CD8-positive, alpha-beta T cell (primary cell): ENCODE measurements at regions of chr1 and their contacts with region 1.

Region 1: GRCh38 chr1:167533851-167534300 is 15.5 kb upstream of the CD247 start:
- DNase-seq: peak; percentile 37 to 80 (median 71)
- ATAC-seq: peak; percentile 93
- H3K4me3 ChIP-seq: no peak overlapping the region
- H3K4me3 Mint-ChIP-seq: no peak overlapping the region
- H3K27ac ChIP-seq: no peak overlapping the region
- H3K27ac Mint-ChIP-seq: no peak overlapping the region
- H3K4me1 ChIP-seq: no peaks in the 10 kb centered on the region
- H3K4me1 Mint-ChIP-seq: peaks cover 3% of the 10 kb centered on the region
- H3K27me3 ChIP-seq: no peaks in the 10 kb centered on the region
- H3K27me3 Mint-ChIP-seq: no peaks in the 10 kb centered on the region
- CTCF ChIP-seq: peak; percentile 98

Region 2: GRCh38 chr1:167059045-167059808 is 474.6 kb before region 1 on chr1:
- CTCF ChIA-PET with region 1: interaction called, 5 read pairs
- POLR2A ChIA-PET with region 1: no interaction called
- intact Hi-C with region 1: loop called in 1 of 2 experiments (anchors 1 kb)
- DNase-seq: peak; percentile 46 to 85 (median 74)
- ATAC-seq: peak; percentile 84
- H3K4me3 ChIP-seq: no peak overlapping the region
- H3K4me3 Mint-ChIP-seq: no peak overlapping the region
- H3K27ac ChIP-seq: no peak overlapping the region
- H3K27ac Mint-ChIP-seq: no peak overlapping the region
- H3K4me1 ChIP-seq: peaks cover 5% of the 10 kb centered on the region
- H3K4me1 Mint-ChIP-seq: peaks cover 6% of the 10 kb centered on the region
- H3K27me3 ChIP-seq: no peaks in the 10 kb centered on the region
- H3K27me3 Mint-ChIP-seq: no peaks in the 10 kb centered on the region
- CTCF ChIP-seq: peak; percentile 93

Region 3: GRCh38 chr1:167388976-167389375 is 144.9 kb before region 1 on chr1:
- CTCF ChIA-PET with region 1: interaction called, 11 read pairs
- POLR2A ChIA-PET with region 1: no interaction called
- intact Hi-C with region 1: no loop called
- DNase-seq: no peak
- ATAC-seq: no peak
- H3K4me3 ChIP-seq: no peak overlapping the region
- H3K4me3 Mint-ChIP-seq: no peak overlapping the region
- H3K27ac ChIP-seq: no peak overlapping the region
- H3K27ac Mint-ChIP-seq: no peak overlapping the region
- H3K4me1 ChIP-seq: no peaks in the 10 kb centered on the region
- H3K4me1 Mint-ChIP-seq: no peaks in the 10 kb centered on the region
- H3K27me3 ChIP-seq: no peaks in the 10 kb centered on the region
- H3K27me3 Mint-ChIP-seq: no peaks in the 10 kb centered on the region
- CTCF ChIP-seq: no peak

Region 4: DNA sequence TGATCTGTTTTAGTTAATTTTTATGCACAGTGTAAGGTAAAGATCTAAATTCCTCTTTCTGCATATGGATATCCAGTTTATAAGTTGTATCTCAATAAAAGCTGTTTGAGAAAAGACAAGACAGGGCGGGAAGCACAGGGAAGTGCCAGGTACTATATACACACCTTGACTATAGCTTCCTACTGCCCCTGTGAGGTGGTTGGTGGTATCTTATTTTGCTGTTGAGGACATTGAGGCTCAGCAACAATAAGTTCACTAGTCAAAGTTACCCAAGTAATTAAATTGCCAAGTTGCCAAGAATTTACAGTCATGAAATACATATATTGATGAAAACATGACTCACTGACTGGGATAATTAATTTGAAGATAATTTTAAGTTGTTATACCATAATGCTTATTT is 124.7 kb before region 1 on chr1:
- CTCF ChIA-PET with region 1: interaction called, 13 read pairs
- POLR2A ChIA-PET with region 1: interaction called, 4 read pairs
- intact Hi-C with region 1: no loop called
- DNase-seq: peak in 1 of 9 experiments; percentile 36
- ATAC-seq: peak; percentile 57
- H3K4me3 ChIP-seq: no peak overlapping the region
- H3K4me3 Mint-ChIP-seq: no peak overlapping the region
- H3K27ac ChIP-seq: no peak overlapping the region
- H3K27ac Mint-ChIP-seq: no peak overlapping the region
- H3K4me1 ChIP-seq: no peaks in the 10 kb centered on the region
- H3K4me1 Mint-ChIP-seq: peaks cover 3% of the 10 kb centered on the region
- H3K27me3 ChIP-seq: no peaks in the 10 kb centered on the region
- H3K27me3 Mint-ChIP-seq: no peaks in the 10 kb centered on the region
- CTCF ChIP-seq: no peak

Region 5: GRCh38 chr1:167447521-167448136 is 86.2 kb before region 1 on chr1:
- CTCF ChIA-PET with region 1: interaction called, 58 read pairs
- POLR2A ChIA-PET with region 1: no interaction called
- intact Hi-C with region 1: loop called in 1 of 2 experiments (anchors 2 kb)
- DNase-seq: peak in 8 of 9 experiments; percentile 31 to 89 (median 76)
- ATAC-seq: peak; percentile 82
- H3K4me3 ChIP-seq: peak overlapping the region; percentile 19 to 32
- H3K4me3 Mint-ChIP-seq: peak overlapping the region; percentile 68
- H3K27ac ChIP-seq: peak overlapping the region; percentile 82 to 89
- H3K27ac Mint-ChIP-seq: peak overlapping the region; percentile 97
- H3K4me1 ChIP-seq: peaks cover 73% of the 10 kb centered on the region
- H3K4me1 Mint-ChIP-seq: peaks cover 85% of the 10 kb centered on the region
- H3K27me3 ChIP-seq: no peaks in the 10 kb centered on the region
- H3K27me3 Mint-ChIP-seq: no peaks in the 10 kb centered on the region
- CTCF ChIP-seq: no peak

Region 6: DNA sequence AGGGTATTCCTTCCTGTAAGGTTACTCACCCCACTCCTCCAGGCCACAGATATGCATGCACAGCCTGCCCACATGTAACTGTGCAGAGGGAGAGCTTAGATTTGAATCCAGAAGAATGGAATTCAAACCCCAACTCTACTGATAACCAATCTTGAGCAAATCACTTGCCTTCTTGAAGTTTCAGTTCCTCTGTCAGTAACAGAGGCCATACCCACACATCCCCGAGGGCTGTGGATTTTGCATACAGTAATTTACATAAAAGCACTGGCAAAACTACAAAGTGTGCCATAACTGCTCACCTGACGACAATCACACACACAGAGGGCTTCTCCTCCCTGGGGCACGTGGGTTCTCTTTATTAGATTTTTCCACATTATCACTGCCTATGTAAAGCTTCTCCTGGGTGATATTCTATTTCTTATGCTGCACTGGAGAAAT is 34.2 kb before region 1 on chr1:
- CTCF ChIA-PET with region 1: interaction called, 17 read pairs
- POLR2A ChIA-PET with region 1: no interaction called
- intact Hi-C with region 1: no loop called
- DNase-seq: peak in 4 of 9 experiments; percentile 37 to 66 (median 40)
- ATAC-seq: peak; percentile 70
- H3K4me3 ChIP-seq: no peak overlapping the region
- H3K4me3 Mint-ChIP-seq: peak overlapping the region; percentile 58
- H3K27ac ChIP-seq: peak overlapping the region in 1 of 2 experiments; percentile 65
- H3K27ac Mint-ChIP-seq: peak overlapping the region; percentile 86
- H3K4me1 ChIP-seq: peaks cover 100% of the 10 kb centered on the region
- H3K4me1 Mint-ChIP-seq: peaks cover 99% of the 10 kb centered on the region
- H3K27me3 ChIP-seq: no peaks in the 10 kb centered on the region
- H3K27me3 Mint-ChIP-seq: no peaks in the 10 kb centered on the region
- CTCF ChIP-seq: no peak

Region 7: DNA sequence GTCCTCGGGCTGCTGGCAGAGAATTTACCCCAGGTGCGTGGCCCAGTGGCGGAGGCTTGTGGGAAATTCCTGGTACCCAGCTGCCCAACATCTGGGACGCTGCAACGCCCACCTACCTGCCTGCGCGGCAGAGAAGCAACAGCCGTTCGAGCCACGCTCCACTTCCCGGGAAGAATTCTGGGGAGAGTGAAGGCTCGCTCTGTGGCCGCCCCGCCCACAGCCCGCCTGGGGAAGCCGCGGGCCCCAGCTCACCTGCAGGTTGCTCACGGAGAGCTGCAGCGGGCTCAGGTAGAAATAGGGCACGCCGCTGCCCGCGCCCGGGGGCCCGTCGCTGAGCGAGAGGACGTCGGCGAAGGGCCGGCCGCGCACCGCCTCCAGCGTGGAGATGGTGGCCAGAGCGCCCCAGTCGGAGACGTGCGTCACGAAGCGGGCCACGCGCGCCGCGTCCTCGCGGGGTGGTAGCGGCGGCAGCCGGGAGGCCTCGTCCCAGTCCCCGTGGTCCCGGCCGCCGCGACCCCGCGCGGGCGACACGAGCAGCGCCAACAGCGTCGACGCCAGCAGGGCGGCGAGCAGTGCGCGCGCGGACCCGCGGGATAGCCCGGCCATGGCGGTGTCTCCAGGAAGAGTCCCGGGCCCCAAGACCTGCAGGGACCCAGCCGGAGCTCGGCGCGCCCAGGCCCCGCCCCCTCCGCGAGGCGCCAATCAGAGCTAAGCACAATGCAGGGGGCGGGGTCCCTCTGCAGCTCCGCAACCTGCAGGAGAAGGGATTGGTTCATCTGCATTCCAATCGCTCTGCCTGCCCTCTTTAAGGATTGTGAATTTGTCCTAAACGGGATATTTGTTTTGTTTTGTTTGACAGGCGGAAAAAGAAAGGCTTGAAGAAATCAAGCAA is 19.5 kb after region 1 on chr1 and contains the start of gene CREG1:
- CTCF ChIA-PET with region 1: interaction called, 11 read pairs
- POLR2A ChIA-PET with region 1: no interaction called
- intact Hi-C with region 1: no loop called
- DNase-seq: peak; percentile 70 to 93 (median 88)
- ATAC-seq: peak; percentile 97
- H3K4me3 ChIP-seq: peak within 1 kb of the TSS; percentile 62 to 70
- H3K4me3 Mint-ChIP-seq: peak within 1 kb of the TSS; percentile 88
- H3K27ac ChIP-seq: peak within 1 kb of the TSS in 1 of 2 experiments; percentile 57
- H3K27ac Mint-ChIP-seq: no peak within 1 kb of the TSS
- H3K4me1 ChIP-seq: peaks cover 18% of the 10 kb centered on the region
- H3K4me1 Mint-ChIP-seq: peaks cover 47% of the 10 kb centered on the region
- H3K27me3 ChIP-seq: no peaks in the 10 kb centered on the region
- H3K27me3 Mint-ChIP-seq: no peaks in the 10 kb centered on the region
- CTCF ChIP-seq: no peak
- total RNA-seq, gene CREG1: 9.3 to 9.8 TPM